ENCODE measurements at regions of chr16 and their contacts with region 1.

Region 1: GRCh38 chr16:84484579-84485254 is 19.7 kb downstream of the MEAK7 start:
- DNase-seq: peak; percentile 62
- H3K4me3 ChIP-seq: no peak overlapping the region
- H3K27ac ChIP-seq: no peak overlapping the region
- H3K4me1 ChIP-seq: no peaks in the 10 kb centered on the region
- H3K27me3 ChIP-seq: no peaks in the 10 kb centered on the region

Region 2: GRCh38 chr16:84284154-84284722 is 200.5 kb before region 1 on chr16:
- in situ Hi-C with region 1: loop called (anchors 10 kb)
- DNase-seq: peak; percentile 72
- H3K4me3 ChIP-seq: no peak overlapping the region
- H3K27ac ChIP-seq: no peak overlapping the region
- H3K4me1 ChIP-seq: no peaks in the 10 kb centered on the region
- H3K27me3 ChIP-seq: 0 out of 2 replicates have a peak, but pooled peaks cover 5% of the 10 kb centered on the region

Measured in GM23248 (cell line).